Activated B cell treated with CpG ODN at 0.5 μM for 24 hours (primary cell): ENCODE measurements at regions of chr6 and their contacts with region 1.

Region 1: GRCh38 chr6:31729515-31729978 is 448 bp upstream of the DDAH2 start:
- DNase-seq: peak; percentile 73
- ATAC-seq: peak; percentile 45
- H3K4me3 Mint-ChIP-seq: peak overlapping the region; percentile 97
- H3K27ac Mint-ChIP-seq: peak overlapping the region; percentile 92
- H3K4me1 Mint-ChIP-seq: peaks cover 71% of the 10 kb centered on the region
- H3K27me3 Mint-ChIP-seq: no peaks in the 10 kb centered on the region
- CTCF ChIP-seq: no peak

Region 2: DNA sequence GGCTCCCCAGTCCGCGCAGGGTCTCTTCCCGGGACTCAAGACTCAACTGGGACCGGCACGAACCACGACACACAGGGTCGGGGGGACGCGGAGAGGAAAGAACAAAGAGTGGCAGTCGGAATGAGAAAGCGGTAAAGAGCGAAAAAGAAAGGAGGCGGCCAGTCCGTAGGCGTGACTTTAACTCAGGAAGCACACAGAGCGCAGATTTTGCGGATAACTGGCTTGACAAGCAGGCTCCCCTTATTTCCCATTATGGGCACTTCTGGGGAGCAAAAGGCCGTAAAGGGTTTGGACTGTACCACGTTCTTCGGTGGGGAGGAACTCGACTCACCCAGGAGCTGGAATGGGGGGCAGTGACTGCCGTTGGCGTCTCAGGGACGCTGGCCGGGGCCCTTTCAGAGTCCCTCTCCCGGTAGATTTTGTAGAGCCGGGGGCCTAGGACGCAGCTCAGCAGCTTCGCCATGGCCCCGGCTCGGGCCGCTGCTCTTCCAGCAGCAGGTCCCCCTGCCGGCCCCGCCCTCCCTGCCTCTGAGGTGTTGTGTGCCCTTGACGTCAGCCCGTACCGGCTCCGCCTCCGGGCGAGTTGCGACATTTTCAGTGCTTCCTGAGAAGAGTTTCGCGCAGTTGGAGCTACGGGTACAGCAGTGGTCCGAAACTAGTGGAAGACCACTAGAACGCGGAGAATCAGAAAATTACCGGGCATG is 26.6 kb before region 1 on chr6 and contains the start of gene ABHD16A:
- CTCF ChIA-PET with region 1: interaction called, 3 read pairs
- POLR2A ChIA-PET with region 1: interaction called, 32 read pairs
- intact Hi-C with region 1: loop called (anchors 1 kb)
- DNase-seq: peak; percentile 94
- ATAC-seq: peak; percentile 93
- H3K4me3 Mint-ChIP-seq: peak within 1 kb of the TSS; percentile 99
- H3K27ac Mint-ChIP-seq: peak within 1 kb of the TSS; percentile 89
- H3K4me1 Mint-ChIP-seq: peaks cover 28% of the 10 kb centered on the region
- H3K27me3 Mint-ChIP-seq: no peaks in the 10 kb centered on the region
- CTCF ChIP-seq: no peak
- total RNA-seq, gene ABHD16A: 49.3 and 59.1 TPM in 2 replicates

Region 3: DNA sequence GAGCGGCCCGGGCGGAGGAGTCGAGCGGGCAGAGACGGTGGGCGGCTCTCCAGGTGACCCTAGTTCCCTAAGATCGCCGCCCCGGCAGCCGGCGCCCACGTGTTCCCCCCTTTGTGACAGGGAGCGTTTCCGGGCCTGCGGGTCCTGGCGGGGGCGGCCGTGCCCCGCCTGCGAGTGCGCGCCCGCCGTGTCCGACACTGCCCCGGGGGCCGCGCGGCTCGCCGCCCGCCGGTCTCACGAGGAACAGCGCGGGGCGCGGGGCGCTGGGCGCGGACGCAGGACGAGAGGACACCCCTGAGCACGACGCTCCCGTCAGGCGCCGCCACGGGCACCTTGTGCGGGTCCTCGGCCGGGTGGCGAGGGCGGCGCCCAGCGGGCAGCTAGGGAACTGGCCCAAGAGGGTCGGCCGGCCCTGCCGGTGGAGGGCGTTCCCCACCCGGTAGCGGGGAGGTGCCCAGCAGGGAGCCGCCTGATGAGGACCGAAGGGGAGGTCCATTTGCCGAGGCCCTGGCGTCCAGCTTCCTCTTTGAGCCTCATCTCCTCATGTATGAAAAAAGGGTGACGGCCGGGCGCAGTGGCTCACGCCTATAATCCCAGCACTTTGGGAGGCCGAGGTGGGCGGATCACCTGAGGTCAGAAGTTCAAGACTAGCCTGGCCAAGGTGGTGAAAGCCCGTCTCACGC is 66.2 kb after region 1 on chr6 and contains the start of gene VARS1:
- CTCF ChIA-PET with region 1: interaction called, 8 read pairs
- POLR2A ChIA-PET with region 1: interaction called, 103 read pairs
- intact Hi-C with region 1: loop called (anchors 1 kb)
- DNase-seq: peak; percentile 89
- ATAC-seq: peak; percentile 89
- H3K4me3 Mint-ChIP-seq: peak within 1 kb of the TSS; percentile 98
- H3K27ac Mint-ChIP-seq: peak within 1 kb of the TSS; percentile 98
- H3K4me1 Mint-ChIP-seq: peaks cover 65% of the 10 kb centered on the region
- H3K27me3 Mint-ChIP-seq: no peaks in the 10 kb centered on the region
- CTCF ChIP-seq: no peak
- total RNA-seq, gene VARS1: 136 and 140 TPM in 2 replicates

Region 4: GRCh38 chr6:31815025-31815838 is 85.7 kb after region 1 on chr6 and contains the starts of genes HSPA1A and HSPA1L:
- CTCF ChIA-PET with region 1: interaction called, 9 read pairs
- POLR2A ChIA-PET with region 1: interaction called, 42 read pairs
- intact Hi-C with region 1: loop called (anchors 2 kb)
- DNase-seq: peak; percentile 59
- ATAC-seq: peak; percentile 49
- H3K4me3 Mint-ChIP-seq: peak within 1 kb of the TSS; percentile 91
- H3K27ac Mint-ChIP-seq: peak within 1 kb of the TSS; percentile 90
- H3K4me1 Mint-ChIP-seq: peaks cover 30% of the 10 kb centered on the region
- H3K27me3 Mint-ChIP-seq: no peaks in the 10 kb centered on the region
- CTCF ChIP-seq: no peak
- total RNA-seq, gene HSPA1A: 27.1 and 28.1 TPM in 2 replicates
- total RNA-seq, gene HSPA1L: 1.2 and 2.1 TPM in 2 replicates

Region 5: GRCh38 chr6:31862344-31863227 is 133.0 kb after region 1 on chr6 and contains the start of gene NEU1:
- CTCF ChIA-PET with region 1: no interaction called
- POLR2A ChIA-PET with region 1: interaction called, 8 read pairs
- intact Hi-C with region 1: loop called (anchors 2 kb)
- DNase-seq: peak; percentile 93
- ATAC-seq: peak; percentile 91
- H3K4me3 Mint-ChIP-seq: peak within 1 kb of the TSS; percentile 95
- H3K27ac Mint-ChIP-seq: peak within 1 kb of the TSS; percentile 93
- H3K4me1 Mint-ChIP-seq: peaks cover 21% of the 10 kb centered on the region
- H3K27me3 Mint-ChIP-seq: no peaks in the 10 kb centered on the region
- CTCF ChIP-seq: no peak
- total RNA-seq, gene NEU1: 18.3 and 19.2 TPM in 2 replicates